ENCODE measurements at regions of chr1 and their contacts with region 1.

Region 1: DNA sequence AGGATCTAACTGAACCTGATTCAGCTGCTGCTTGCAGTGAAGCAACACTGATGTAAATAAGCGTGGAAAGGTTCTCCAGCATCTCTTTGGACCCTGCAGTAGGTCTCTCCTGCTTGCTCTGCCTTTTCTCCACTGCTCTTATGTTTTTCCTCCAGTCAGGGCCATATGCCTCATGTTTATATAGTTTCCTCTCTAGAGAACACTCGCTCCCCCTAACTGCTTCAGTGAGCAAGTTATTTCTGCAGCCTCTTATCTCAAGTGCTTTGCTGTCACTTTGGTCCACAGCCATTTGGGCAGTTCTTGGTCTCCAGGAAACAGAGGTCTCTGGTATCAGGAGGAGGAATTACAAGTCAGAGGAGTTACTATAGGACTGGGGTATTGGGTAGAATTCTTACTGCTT is 5.3 kb downstream of the PRUNE1 start:
- DNase-seq: no peak
- ATAC-seq: peak; percentile 87
- H3K4me3 ChIP-seq: no peak overlapping the region
- H3K27ac ChIP-seq: peak overlapping the region; percentile 37
- H3K4me1 ChIP-seq: peaks cover 41% of the 10 kb centered on the region
- H3K27me3 ChIP-seq: no peaks in the 10 kb centered on the region
- CTCF ChIP-seq: peak; percentile 13

Region 2: DNA sequence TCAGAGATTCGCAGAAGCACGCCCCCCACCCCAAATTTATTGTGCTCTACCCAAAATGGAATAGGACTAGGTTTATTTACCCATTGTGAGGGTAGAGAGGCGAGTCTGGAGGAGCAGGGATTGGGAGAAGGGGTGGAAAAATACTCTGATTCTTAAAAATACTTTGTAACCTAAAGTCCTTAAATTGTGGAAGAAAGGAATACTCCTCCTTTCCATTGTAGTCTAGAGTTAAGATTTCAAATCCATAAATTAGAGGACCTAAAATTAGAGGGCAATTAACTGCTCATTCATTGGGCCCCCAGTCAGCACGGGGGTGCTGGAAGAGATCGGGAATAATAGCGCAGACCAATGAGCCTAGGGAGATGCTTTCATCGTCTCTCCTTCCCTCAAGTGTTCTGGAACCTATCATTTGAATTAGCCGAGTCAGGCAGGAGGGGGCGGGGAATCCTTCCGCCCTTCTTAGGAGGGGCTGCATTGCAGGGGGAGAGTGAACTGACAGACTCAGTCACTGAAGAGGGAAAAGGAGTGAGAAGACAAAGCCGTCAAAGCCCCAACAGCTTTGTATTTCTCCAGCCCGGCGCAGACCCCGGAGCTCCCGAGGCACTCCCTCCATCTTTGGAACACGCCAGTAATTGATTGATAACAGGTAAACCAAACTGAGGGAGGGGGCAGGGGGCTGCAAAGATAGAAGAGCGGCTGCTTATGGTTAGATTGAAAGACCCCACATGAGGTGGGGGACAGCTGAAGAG is 46.6 kb after region 1 on chr1 and contains the start of gene MLLT11:
- intact Hi-C with region 1: loop called (anchors 10 kb)
- DNase-seq: no peak
- ATAC-seq: no peak
- H3K4me3 ChIP-seq: peak within 1 kb of the TSS; percentile 86
- H3K27ac ChIP-seq: peak within 1 kb of the TSS; percentile 89
- H3K4me1 ChIP-seq: peaks cover 37% of the 10 kb centered on the region
- H3K27me3 ChIP-seq: no peaks in the 10 kb centered on the region
- CTCF ChIP-seq: no peak
- total RNA-seq, gene MLLT11: 0.72 TPM

Measured in upper lobe of right lung (tissue), 1 donor.